Endothelial cell of umbilical vein (primary cell): ENCODE measurements at regions of chr7 and their contacts with region 1.

Region 1: DNA sequence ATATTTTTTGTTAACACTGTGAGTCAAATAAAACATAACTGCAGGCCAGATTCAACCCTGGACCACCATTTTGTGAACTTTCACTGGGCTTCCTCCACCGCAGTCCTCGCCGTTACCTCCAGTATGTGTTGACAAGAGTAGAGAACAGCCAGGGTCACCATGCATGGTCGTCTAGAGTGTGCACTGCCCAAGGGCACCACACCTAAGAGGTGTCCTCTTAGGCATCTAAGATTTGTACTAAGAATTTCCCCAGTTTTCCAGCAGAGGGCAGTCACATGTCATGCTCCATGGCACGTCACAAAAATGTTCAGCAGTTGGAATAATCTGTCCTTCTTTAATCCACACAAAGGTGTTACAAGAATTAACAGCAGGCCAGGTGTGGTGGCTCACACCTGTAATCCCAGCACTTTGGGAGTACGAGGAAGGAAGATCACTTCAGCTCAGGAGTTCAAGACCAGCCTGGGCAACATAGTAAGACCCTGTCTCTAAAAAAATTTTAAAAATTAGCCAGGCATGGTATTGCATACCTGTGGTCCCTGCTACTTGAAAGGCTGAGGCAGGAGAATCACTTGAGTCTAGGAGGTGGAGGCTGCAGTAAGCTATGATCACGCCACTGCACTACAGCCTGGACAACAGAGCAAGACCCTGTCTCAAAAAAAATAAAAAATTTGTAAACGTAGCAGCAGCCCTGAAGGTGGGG is 71.2 kb upstream of the FOXK1 start:
- DNase-seq: peak; percentile 71
- H3K4me3 ChIP-seq: no peak overlapping the region
- H3K27ac ChIP-seq: no peak overlapping the region
- H3K4me1 ChIP-seq: peaks cover 12% of the 10 kb centered on the region
- H3K27me3 ChIP-seq: no peaks in the 10 kb centered on the region
- CTCF ChIP-seq: peak; percentile 65 to 68
- POLR2A ChIP-seq: no peak

Region 2: GRCh38 chr7:4626318-4626845 is 15.5 kb after region 1 on chr7:
- CTCF ChIA-PET with region 1: interaction called, 45 read pairs
- POLR2A ChIA-PET with region 1: interaction called, 5 read pairs
- dilution Hi-C with region 1: no loop called
- intact Hi-C with region 1: loop called (anchors 1 kb)
- DNase-seq: no peak
- H3K4me3 ChIP-seq: no peak overlapping the region
- H3K27ac ChIP-seq: no peak overlapping the region
- H3K4me1 ChIP-seq: peaks cover 5% of the 10 kb centered on the region
- H3K27me3 ChIP-seq: no peaks in the 10 kb centered on the region
- CTCF ChIP-seq: no peak
- POLR2A ChIP-seq: no peak

Region 3: GRCh38 chr7:4681886-4682620 is 71.1 kb after region 1 on chr7 and contains the start of gene FOXK1:
- CTCF ChIA-PET with region 1: no interaction called
- POLR2A ChIA-PET with region 1: no interaction called
- dilution Hi-C with region 1: no loop called
- intact Hi-C with region 1: loop called (anchors 1 kb)
- DNase-seq: peak; percentile 39
- H3K4me3 ChIP-seq: peak within 1 kb of the TSS; percentile 69 to 76 (median 74)
- H3K27ac ChIP-seq: peak within 1 kb of the TSS; percentile 87
- H3K4me1 ChIP-seq: peaks cover 19% of the 10 kb centered on the region
- H3K27me3 ChIP-seq: no peaks in the 10 kb centered on the region
- CTCF ChIP-seq: no peak
- POLR2A ChIP-seq: peak; percentile 65
- total RNA-seq, gene FOXK1: 47.0 and 52.1 TPM in 2 replicates

Region 4: DNA sequence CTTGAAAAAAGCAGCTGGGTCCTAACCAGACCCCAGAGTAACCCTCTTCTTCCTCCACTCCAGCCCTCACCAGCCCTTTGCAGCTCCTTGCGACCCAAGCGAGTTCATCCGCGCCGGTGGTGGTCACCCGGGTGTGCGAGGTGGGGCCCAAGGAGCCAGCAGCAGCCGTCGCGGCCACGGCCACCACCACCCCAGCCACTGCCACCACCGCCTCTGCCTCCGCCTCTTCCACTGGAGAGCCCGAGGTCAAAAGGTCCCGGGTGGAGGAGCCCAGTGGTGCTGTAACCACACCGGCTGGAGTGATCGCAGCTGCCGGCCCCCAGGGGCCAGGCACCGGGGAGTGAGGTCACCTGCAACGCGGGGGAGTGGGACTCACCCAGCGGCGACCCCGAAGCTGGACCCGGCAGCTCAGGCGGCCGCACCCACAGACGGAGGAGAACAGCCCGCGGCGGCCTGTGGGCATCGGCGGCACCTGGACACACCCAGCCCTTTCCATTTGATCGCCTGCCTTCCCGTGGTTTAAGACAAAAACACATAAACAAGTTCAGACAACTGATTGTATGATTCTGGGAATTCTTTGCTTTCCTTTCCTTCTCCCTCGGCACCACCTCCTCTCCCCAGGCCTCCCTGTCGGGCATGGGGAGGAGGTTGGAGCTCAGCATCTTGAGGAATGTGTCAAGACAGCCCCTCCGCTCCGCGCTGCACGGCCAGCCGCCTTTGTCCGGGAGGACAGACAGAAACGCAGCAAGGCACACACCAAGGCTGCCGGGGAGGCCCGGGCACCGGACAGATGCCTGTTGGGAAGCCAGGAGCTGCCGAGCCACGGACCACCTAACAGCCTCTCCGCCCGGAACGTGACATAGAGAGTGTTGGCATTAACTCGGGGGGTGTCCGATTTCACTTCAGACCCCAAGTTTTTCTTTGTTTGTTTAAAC is 151.5 kb after region 1 on chr7:
- CTCF ChIA-PET with region 1: no interaction called
- POLR2A ChIA-PET with region 1: no interaction called
- dilution Hi-C with region 1: no loop called
- intact Hi-C with region 1: no loop called
- DNase-seq: no peak
- H3K4me3 ChIP-seq: no peak overlapping the region
- H3K27ac ChIP-seq: no peak overlapping the region
- H3K4me1 ChIP-seq: no peaks in the 10 kb centered on the region
- H3K27me3 ChIP-seq: no peaks in the 10 kb centered on the region
- CTCF ChIP-seq: no peak
- POLR2A ChIP-seq: no peak

Region 5: DNA sequence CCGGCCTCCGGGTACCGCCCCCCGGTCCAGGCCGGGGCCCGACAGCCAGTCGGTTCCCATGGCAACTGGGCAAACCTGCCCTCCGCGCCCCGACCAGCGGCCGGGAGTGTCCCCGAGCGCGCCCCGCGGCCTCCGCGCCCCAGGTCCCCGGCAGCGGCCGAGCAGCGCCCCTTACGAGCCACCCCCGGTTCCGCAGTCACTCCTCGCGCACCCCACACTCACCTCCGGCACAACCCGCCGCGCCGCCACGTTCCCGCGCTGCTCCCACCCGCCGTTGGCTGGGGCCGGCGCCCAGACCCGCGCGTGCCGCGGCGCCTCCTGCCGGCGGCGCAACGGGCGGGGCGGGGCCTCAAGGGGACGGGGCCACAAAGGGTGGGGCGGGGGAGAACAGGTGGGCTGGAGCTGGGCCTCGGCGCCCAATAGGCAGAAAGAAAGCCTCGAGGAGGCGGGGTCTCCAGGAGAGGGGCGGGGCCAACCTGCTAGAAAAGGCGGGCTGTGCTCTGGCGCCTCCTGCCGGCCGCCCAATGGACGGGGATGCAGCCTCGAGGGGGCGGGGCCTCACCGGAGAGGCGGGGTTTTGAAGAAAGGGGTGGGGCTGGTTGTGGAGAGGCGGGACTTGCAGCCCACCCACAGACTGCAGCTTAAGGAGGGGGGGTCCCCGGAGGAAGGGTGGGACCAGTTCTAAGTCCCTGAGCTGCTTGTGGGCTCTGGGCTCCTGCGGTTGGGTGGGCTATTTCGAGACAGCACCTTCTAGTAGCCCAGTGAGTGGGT is 272.6 kb after region 1 on chr7 and contains the start of gene RADIL:
- CTCF ChIA-PET with region 1: no interaction called
- POLR2A ChIA-PET with region 1: no interaction called
- dilution Hi-C with region 1: no loop called
- intact Hi-C with region 1: loop called (anchors 1 kb)
- DNase-seq: peak; percentile 89
- H3K4me3 ChIP-seq: peak within 1 kb of the TSS; percentile 3 to 46 (median 9)
- H3K27ac ChIP-seq: no peak within 1 kb of the TSS
- H3K4me1 ChIP-seq: peaks cover 8% of the 10 kb centered on the region
- H3K27me3 ChIP-seq: no peaks in the 10 kb centered on the region
- CTCF ChIP-seq: peak; percentile 80 to 92
- POLR2A ChIP-seq: no peak
- total RNA-seq, gene RADIL: 1.0 and 2.5 TPM in 2 replicates

Region 6: DNA sequence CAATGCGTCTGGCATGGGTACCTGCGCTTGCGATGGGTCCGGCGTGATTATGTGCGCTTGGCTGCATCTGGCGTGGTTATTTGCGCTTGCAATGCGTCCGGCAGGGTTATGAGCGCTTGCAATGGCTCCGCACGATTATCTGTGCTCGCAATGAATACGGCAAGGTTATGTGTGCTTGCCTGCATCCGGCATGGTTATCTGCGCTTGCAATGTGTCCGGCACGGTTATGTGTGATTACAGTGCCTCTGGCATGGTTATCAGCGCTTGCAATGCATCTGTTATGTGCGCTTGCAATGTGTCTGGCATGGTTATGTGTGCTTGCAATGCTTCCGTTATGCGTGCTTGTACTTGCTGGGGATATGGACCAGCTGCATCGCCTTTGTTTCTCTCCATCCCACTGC is 472.4 kb after region 1 on chr7:
- CTCF ChIA-PET with region 1: no interaction called
- POLR2A ChIA-PET with region 1: no interaction called
- dilution Hi-C with region 1: no loop called
- intact Hi-C with region 1: loop called (anchors 10 kb)
- DNase-seq: no peak
- H3K4me3 ChIP-seq: no peak overlapping the region
- H3K27ac ChIP-seq: no peak overlapping the region
- H3K4me1 ChIP-seq: no peaks in the 10 kb centered on the region
- H3K27me3 ChIP-seq: no peaks in the 10 kb centered on the region
- CTCF ChIP-seq: no peak
- POLR2A ChIP-seq: no peak